ENCODE measurements at regions of chr14 and their contacts with region 1.

Region 1: GRCh38 chr14:23068476-23069412 is 11.4 kb upstream of the CDH24 start:
- DNase-seq: peak; percentile 82
- H3K4me3 Mint-ChIP-seq: no peak overlapping the region
- H3K27ac Mint-ChIP-seq: peak overlapping the region; percentile 66
- H3K4me1 Mint-ChIP-seq: peaks cover 42% of the 10 kb centered on the region
- H3K27me3 Mint-ChIP-seq: no peaks in the 10 kb centered on the region

Region 2: DNA sequence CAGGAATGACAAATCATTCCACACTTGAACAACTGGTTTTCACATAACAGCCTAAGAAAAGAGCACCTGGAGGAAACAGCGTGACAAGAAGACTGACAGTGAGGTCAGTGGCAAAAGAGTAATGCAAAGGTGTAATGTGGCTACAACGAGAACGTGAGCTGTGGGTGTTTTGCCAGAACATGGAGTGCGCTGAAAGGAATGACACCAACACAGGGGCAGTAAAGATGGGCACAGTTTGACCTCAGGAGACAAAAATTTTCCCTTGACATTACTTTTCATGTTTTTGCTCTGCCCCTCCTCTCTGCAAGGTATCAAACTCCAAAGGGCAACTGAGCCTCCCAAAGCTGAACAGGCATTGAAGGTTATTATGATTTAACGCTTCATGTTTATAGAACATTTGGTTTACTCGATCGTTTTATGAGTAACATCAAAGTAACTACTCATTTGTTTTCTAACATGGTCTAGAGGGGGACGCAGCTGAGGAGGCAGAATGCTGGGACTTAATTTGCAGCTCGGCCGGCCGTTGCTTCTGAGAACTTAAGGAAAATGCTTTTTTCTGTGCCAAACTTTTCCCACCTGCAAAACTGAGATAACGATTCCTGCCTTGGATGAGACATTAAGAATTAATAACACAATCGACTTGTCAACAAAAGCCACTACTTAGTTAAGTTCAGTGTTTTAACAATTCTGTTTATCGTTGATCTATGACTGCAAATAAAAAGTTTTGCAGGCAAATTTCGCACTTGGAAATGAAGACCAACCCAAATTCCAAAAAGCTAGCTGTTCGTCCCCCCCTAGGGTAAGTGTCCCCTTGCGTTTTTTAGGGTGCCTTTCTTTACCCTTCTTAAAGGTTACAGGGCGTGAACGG is 112.8 kb before region 1 on chr14:
- CTCF ChIA-PET with region 1: interaction called, 16 read pairs
- POLR2A ChIA-PET with region 1: no interaction called
- intact Hi-C with region 1: no loop called
- DNase-seq: no peak
- H3K4me3 Mint-ChIP-seq: peak overlapping the region; percentile 88
- H3K27ac Mint-ChIP-seq: peak overlapping the region; percentile 85
- H3K4me1 Mint-ChIP-seq: peaks cover 16% of the 10 kb centered on the region
- H3K27me3 Mint-ChIP-seq: no peaks in the 10 kb centered on the region

Region 3: GRCh38 chr14:23025151-23025814 is 43.5 kb before region 1 on chr14:
- CTCF ChIA-PET with region 1: interaction called, 15 read pairs
- POLR2A ChIA-PET with region 1: no interaction called
- intact Hi-C with region 1: no loop called
- DNase-seq: peak; percentile 53
- H3K4me3 Mint-ChIP-seq: peak overlapping the region; percentile 9
- H3K27ac Mint-ChIP-seq: peak overlapping the region; percentile 81
- H3K4me1 Mint-ChIP-seq: peaks cover 47% of the 10 kb centered on the region
- H3K27me3 Mint-ChIP-seq: no peaks in the 10 kb centered on the region

Region 4: DNA sequence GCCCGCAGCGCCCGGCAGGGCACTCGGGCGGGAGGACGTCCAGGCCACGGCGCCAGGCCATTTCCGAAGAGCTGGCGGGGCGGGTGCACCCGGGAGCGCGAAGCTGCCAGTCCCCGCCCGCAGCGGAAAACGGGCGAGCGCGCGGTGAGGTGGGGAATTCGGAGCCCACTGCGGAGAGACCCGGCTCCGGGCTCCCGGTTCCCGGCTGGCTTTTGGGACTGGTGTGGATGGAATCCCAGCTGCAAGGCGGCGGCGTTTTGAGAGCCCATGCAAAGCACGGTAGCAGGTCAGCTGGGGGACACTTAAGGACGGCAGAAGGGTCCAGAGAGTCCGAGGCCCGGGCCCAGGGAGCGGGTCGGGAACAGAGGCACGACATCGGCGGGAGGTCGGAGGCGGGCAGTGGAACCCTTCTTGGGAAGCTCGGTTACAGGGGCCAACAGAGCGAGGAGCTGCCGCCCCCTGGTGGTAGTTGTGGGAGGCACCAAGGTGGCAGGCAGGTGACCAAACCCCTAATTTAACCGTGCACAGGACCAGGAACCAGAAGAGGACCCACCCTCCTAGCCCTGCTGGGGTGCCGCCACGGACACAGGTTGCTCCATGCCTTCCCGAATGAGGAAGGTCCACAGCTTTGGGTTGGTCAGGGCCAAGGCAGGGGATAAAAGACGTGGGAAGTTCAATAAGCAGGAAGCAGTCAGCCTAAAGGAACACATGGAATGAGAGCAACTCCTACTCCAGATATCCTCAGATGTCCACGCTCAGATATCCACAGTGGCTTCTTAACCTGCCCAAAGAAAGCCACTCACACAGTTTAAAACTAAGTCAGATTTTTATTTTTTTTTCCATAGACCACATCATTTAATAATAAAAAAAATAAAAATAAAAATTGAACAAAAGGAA is 10.7 kb before region 1 on chr14:
- CTCF ChIA-PET with region 1: interaction called, 91 read pairs
- POLR2A ChIA-PET with region 1: interaction called, 4 read pairs
- intact Hi-C with region 1: no loop called
- DNase-seq: peak; percentile 92
- H3K4me3 Mint-ChIP-seq: peak overlapping the region; percentile 78
- H3K27ac Mint-ChIP-seq: no peak overlapping the region
- H3K4me1 Mint-ChIP-seq: peaks cover 16% of the 10 kb centered on the region
- H3K27me3 Mint-ChIP-seq: peaks cover 2% of the 10 kb centered on the region

Region 5: GRCh38 chr14:23109769-23110168 is 41.0 kb after region 1 on chr14:
- CTCF ChIA-PET with region 1: interaction called, 53 read pairs
- POLR2A ChIA-PET with region 1: no interaction called
- intact Hi-C with region 1: loop called (anchors 2 kb)
- DNase-seq: no peak
- H3K4me3 Mint-ChIP-seq: no peak overlapping the region
- H3K27ac Mint-ChIP-seq: no peak overlapping the region
- H3K4me1 Mint-ChIP-seq: peaks cover 4% of the 10 kb centered on the region
- H3K27me3 Mint-ChIP-seq: no peaks in the 10 kb centered on the region

Region 6: DNA sequence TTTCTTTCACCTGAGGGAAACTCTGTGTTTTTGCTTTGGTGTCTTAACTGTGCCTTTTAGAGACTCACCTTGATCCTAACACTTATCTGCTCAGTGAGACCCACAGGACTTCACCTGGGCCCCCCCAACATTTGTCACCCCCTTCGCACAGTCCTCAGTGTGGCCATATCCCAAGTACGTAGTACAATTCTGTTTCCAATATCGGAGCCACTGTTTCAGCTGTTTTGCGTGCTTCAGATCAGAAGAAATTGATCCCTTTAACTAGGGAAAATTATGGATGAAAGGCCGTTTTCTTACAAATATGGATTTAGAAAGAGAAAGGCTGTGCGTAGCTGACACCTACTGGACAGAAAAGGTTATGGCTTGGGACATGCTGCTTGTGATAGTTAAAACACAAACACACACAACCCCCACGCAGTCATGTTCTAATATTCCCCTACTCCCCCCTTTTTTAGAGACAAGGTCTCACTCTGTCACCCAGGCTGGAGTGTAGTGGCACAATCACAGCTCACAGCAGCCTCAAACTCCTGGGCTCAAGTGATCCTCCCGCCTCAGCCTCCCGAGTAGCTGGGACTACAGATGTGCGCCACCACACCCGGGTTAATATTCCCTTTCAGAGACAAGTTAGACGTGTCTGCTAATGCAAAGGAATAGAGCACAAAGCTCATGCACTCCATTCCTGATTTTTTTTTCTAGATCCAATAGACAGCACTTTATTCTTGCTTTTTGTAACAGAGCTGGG is 118.3 kb after region 1 on chr14:
- CTCF ChIA-PET with region 1: interaction called, 15 read pairs
- POLR2A ChIA-PET with region 1: no interaction called
- intact Hi-C with region 1: loop called (anchors 1 kb)
- DNase-seq: peak; percentile 34
- H3K4me3 Mint-ChIP-seq: no peak overlapping the region
- H3K27ac Mint-ChIP-seq: no peak overlapping the region
- H3K4me1 Mint-ChIP-seq: no peaks in the 10 kb centered on the region
- H3K27me3 Mint-ChIP-seq: no peaks in the 10 kb centered on the region

Region 7: DNA sequence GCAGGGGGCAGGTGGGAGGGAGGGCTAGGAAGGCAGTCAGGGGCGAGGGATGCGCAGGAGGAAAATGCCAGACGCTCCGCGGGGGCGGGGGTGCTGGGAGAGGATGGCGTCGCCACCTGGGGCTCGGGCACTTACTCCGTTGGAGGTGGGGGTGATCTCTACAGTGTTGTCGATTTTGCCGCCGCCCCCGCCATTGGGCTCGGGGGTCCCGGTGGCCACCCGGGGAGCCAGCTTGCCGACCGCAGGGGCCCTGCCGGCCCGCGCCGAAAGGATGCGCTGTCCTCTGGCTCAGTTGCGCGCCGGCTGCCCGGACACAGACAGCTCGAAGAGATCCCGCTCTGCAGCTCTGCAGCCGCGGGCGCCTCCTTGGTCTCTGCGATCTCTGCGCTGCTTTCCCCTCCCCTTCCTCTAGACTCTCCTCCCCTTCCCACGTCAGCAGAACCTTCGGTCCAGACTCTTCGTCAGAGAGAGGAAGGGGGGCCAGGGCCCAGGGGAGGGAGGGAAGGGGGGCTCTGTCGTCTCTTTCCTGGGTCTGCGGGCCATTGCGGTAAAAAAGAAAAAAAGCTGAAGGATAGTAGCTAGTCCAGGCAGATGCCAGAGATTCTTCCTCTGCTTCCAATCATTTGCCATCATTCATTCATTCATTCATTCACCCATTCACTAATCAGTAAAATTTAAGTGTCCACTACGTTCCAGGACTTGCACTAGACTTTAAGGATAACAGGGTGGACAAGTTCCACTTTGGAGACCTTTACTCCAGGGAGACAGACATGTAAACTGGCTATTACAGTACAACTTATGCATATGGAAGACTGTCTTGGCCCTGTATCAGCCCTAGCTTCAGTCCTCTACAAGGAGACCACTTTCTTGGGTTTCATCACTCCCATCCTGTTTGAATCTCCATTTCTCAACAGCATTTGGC is 284.0 kb after region 1 on chr14 and contains the start of gene SLC22A17:
- CTCF ChIA-PET with region 1: no interaction called
- POLR2A ChIA-PET with region 1: no interaction called
- intact Hi-C with region 1: no loop called
- DNase-seq: peak; percentile 68
- H3K4me3 Mint-ChIP-seq: peak within 1 kb of the TSS; percentile 61
- H3K27ac Mint-ChIP-seq: no peak within 1 kb of the TSS
- H3K4me1 Mint-ChIP-seq: peaks cover 5% of the 10 kb centered on the region
- H3K27me3 Mint-ChIP-seq: peaks cover 30% of the 10 kb centered on the region
- total RNA-seq, gene SLC22A17: 4.4 to 4.8 TPM

Region 8: DNA sequence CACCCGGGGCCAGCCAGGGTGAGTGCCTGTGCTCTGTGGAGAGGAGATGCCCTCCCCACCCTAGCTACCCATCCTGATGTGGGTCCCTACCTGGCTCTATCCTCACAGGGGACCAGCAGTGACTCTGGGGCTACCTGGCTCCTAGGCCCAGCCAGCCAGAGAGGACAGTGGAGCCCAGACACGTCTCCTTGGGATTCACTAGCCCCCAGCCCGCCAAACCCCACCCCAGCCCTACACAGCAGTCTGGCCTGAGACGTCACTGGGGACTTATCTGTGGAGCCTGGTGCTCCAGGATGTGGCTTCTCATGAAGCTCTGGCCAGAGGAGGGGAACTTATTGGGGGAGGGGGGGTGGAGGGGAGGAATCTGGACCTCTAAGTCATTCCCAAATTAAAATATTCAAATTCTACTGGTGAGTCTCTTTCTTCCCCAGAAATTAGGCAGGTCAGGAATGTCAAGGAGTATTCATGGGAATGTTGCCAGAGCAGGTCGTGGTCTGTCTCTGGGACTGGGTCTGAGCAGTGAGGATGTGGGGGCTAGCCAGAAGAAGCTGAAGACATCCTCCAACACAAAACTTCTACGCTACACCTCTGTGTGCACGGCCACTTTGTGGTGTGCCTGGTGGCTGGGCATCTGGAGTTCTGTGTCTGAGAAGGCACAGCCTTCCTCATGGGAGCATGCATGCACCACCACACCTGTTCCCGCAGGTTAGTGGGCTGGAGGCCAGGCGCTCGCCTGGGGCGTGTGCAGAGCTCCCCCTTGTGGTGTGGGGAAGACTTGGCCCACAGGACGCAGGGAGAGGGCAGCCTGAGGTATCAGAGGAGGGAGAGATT is 310.8 kb after region 1 on chr14:
- CTCF ChIA-PET with region 1: no interaction called
- POLR2A ChIA-PET with region 1: no interaction called
- intact Hi-C with region 1: no loop called
- DNase-seq: peak; percentile 73
- H3K4me3 Mint-ChIP-seq: no peak overlapping the region
- H3K27ac Mint-ChIP-seq: no peak overlapping the region
- H3K4me1 Mint-ChIP-seq: no peaks in the 10 kb centered on the region
- H3K27me3 Mint-ChIP-seq: peaks cover 7% of the 10 kb centered on the region